ENCODE measurements at regions of chr4 and their contacts with region 1.

Region 1: GRCh38 chr4:93897559-93897958 is 69.0 kb downstream of the ATOH1 start:
- DNase-seq: peak; percentile 6
- ATAC-seq: peak; percentile 75
- H3K4me3 ChIP-seq: no peak overlapping the region
- H3K27ac ChIP-seq: no peak overlapping the region
- H3K4me1 ChIP-seq: no peaks in the 10 kb centered on the region
- H3K27me3 ChIP-seq: no peaks in the 10 kb centered on the region
- CTCF ChIP-seq: peak; percentile 33 to 63 (median 45); a peak in 5 of 6 replicates
- POLR2A ChIP-seq: no peak
- RAD21 ChIP-seq: peak; percentile 47

Region 2: DNA sequence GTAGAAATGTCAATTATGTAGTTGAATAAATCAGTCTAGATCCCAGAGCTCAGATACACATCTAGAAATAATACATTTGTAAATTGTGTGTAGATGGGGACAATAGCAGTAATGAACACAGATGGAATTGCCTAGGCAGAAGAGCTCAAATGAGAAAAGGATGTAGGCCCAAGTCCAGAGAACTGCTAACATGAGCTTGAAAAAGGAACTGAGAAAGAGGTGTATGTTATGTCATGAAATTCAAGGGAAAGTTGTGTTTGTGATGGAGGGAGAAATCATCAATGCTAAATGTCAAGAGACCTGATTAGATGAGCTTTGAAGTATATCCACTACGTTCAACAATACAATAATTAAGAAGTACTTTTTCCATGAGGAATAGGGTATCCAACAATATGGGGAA is 445.6 kb before region 1 on chr4:
- CTCF ChIA-PET with region 1: no interaction called
- POLR2A ChIA-PET with region 1: no interaction called
- RAD21 ChIA-PET with region 1: no interaction called
- intact Hi-C with region 1: no loop called
- DNase-seq: no peak
- ATAC-seq: no peak
- H3K4me3 ChIP-seq: no peak overlapping the region
- H3K27ac ChIP-seq: no peak overlapping the region
- H3K4me1 ChIP-seq: no peaks in the 10 kb centered on the region
- H3K27me3 ChIP-seq: no peaks in the 10 kb centered on the region
- CTCF ChIP-seq: no peak
- POLR2A ChIP-seq: no peak
- RAD21 ChIP-seq: no peak

Region 3: DNA sequence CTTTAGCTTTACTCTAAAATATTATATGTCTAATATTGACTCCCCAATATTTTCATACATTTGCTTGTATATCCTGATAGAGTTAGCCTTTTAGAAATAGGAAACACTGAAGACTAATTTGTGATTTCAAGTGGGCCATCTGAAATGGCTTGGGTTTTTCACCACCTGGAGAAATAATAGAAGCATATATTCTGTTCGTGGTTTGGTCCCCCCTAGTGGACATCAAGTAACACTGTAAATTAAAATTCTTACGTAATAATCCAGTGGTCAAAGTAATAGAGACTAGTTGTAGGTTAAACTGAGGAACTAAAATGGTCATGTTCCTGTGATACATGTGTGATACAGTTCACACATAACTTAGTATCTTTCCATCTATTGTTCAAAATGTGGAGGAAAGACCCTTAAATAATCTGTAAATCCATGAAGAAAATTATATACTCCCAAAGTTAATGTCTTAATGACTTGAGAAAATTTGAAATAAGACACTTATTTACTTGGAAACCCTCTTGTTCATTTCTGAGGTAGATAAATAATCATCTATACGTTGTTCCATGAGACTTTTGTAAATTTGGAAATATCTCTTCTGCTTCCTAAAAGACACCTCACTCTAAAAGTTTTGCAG is 230.3 kb after region 1 on chr4:
- CTCF ChIA-PET with region 1: interaction called, 9 read pairs
- POLR2A ChIA-PET with region 1: no interaction called
- RAD21 ChIA-PET with region 1: no interaction called
- intact Hi-C with region 1: loop called (anchors 1 kb)
- DNase-seq: peak; percentile 50
- ATAC-seq: peak; percentile 78
- H3K4me3 ChIP-seq: no peak overlapping the region
- H3K27ac ChIP-seq: no peak overlapping the region
- H3K4me1 ChIP-seq: no peaks in the 10 kb centered on the region
- H3K27me3 ChIP-seq: no peaks in the 10 kb centered on the region
- CTCF ChIP-seq: peak; percentile 48 to 79 (median 58); a peak in 4 of 6 replicates
- POLR2A ChIP-seq: no peak
- RAD21 ChIP-seq: peak; percentile 67

Region 4: GRCh38 chr4:94256828-94257227 is 359.3 kb after region 1 on chr4:
- CTCF ChIA-PET with region 1: no interaction called
- POLR2A ChIA-PET with region 1: no interaction called
- RAD21 ChIA-PET with region 1: no interaction called
- intact Hi-C with region 1: loop called (anchors 5 kb)
- DNase-seq: no peak
- ATAC-seq: no peak
- H3K4me3 ChIP-seq: no peak overlapping the region
- H3K27ac ChIP-seq: no peak overlapping the region
- H3K4me1 ChIP-seq: no peaks in the 10 kb centered on the region
- H3K27me3 ChIP-seq: no peaks in the 10 kb centered on the region
- CTCF ChIP-seq: peak in 2 of 3 experiments; percentile 26 to 47; a peak in 3 of 6 replicates
- POLR2A ChIP-seq: no peak
- RAD21 ChIP-seq: peak; percentile 42; the same call in 1 of the 2 replicates